ENCODE measurements at regions of chr12 and their contacts with region 1.

Region 1: DNA sequence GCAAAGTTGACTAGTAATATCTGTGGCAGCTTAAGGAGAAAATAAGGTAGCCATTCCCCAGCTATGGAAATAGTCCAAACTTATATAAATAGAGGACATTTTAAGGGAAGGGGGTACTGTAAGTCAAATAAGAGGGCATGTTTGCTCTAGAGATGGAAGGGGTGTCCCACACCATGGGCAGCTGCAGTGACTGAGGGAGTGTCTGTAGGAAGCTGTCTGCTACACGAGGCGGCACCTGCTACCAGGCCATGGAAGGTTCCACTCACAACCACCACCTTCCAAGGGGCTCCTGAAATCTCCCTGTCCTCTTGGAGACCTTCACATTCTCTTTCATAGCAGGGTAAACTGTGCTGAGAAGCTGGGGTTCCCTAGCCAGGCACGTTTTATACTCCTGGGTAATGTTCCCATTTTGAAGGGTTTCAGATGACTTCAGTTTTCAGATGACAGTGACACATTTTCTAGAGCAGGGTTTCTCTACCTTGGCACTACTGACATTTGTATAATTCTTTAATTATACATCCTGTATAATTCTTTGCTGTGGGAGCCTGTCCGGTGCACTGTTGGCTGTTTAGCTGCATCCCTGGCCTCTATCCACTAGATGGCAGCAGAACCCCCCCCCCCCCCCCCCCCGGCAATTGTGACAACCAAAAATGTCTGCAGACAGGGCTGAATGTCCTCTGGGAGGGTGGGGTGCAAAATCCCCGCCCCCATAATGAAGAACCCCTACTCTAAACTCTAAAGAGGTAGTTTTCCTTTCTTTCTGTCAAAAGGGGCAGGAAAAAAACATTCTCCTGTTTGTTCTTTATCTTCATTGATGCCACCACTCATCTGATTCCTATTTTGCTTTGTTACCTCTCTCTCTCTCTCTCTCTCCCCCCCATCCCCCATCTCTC is 11.6 kb upstream of the SMCO2 start:
- DNase-seq: no peak
- H3K4me3 ChIP-seq: no peak overlapping the region
- H3K27ac ChIP-seq: peak overlapping the region in 1 of 59 donors; percentile 24
- H3K27me3 ChIP-seq: no peaks in the 10 kb centered on the region
- CTCF ChIP-seq: peak in 55 of 56 donors; percentile 10 to 74 (median 60)

Region 2: DNA sequence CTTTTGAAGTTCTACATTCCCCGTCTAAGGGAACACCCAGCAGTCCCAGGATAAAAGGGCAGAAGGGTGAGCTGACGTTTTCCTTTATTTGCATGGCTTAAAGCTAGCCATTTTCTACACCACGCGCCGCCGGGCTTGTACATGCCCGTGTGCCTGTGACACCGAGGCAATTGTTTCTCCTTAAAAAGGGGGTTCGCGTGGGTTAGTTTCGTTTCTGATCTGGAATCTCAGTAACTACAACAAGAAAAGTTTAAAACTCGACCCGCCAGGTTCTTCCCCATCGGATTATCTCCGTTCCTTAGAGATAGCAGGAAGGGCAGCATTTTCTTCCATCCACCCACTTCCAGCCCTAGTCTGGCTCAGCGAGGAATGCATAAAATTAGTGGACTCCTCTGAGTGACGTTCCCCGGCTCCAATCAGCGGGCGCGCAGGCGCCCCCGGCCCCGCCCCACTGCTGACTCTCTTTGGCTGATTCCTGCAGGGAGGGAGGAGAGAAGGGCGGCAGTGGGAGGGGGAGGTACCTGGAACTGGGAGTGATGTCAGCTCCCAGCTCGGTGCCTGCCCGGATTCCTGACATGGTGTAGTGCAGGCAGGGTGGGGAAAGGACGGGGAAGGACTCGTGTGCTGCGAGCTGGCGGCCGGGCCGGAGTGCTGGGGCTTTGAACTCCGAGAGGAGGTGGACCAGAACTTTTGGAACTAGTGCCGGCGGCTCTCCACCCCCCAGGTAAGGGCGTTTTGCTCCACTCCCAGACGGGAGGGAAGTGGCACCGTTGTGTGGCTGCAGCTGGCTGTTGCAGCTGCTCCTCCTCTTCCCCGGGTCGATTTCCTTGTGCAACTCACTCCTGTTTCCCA is 88.9 kb after region 1 on chr12 and contains the start of gene PPFIBP1:
- intact Hi-C with region 1: loop called (anchors 5 to 10 kb)
- DNase-seq: peak; percentile 91 to 100 (median 99)
- H3K4me3 ChIP-seq: peak within 1 kb of the TSS; percentile 65 to 95 (median 84)
- H3K27ac ChIP-seq: peak within 1 kb of the TSS; percentile 39 to 95 (median 89)
- H3K27me3 ChIP-seq: no peaks in the 10 kb centered on the region
- CTCF ChIP-seq: peak in 6 of 56 donors; percentile 7 to 27 (median 18)
- total RNA-seq, gene PPFIBP1: 105 to 192 (median 143) TPM

Region 3: DNA sequence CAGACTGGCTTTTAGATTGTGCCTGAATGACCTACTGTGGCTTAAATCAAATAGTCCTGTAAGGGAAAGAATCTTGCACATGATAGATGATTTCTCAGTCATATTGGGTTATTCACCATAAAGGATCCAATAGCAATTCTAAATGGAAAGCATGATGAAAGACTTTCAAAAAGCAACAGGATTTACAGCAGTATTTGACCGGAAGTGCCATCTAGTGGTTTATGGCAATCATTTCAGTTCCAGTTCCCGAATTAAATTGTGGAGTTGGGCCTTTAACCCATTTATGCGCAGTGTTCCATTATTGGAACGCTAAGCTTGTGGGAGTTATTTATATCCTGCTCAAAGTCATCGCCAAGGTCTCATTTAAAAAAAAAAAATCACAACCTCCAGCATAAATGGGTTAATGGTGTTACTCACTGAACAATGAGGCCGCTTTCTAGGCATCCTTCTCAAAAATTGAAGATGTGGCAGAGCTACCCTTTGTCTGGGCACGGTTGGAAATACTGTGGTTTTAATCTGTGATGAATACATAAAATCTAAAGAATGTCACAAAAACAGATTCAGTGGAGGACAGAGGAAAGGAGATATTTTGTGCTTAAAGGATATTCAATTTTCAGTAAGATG is 200.5 kb after region 1 on chr12:
- intact Hi-C with region 1: loop called in 1 of 2 experiments (anchors 5 kb)
- DNase-seq: no peak
- H3K4me3 ChIP-seq: no peak overlapping the region
- H3K27ac ChIP-seq: peak overlapping the region in 12 of 59 donors; percentile 7 to 51 (median 16)
- H3K27me3 ChIP-seq: no peaks in the 10 kb centered on the region
- CTCF ChIP-seq: peak; percentile 54 to 88 (median 76)

Region 4: DNA sequence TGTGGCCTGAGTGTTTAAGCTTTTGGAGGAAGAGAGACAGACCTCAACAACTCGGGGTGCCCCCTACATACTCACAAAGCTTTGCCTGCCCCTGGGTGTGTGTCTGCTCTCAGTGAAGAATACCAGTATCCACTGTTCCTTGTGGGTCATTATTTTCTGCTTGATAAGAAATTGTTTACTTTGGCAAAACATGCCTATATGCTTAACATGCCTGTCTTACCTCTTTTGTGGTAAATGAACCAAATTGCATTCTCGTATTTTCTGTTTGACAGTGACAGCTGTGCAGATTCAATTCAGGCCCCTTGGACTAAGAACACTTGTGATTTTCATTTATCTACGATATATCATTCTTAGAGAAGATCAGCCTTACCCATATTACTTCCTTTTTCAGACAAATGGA is 210.8 kb after region 1 on chr12:
- intact Hi-C with region 1: loop called (anchors 5 kb)
- DNase-seq: no peak
- H3K4me3 ChIP-seq: no peak overlapping the region
- H3K27ac ChIP-seq: peak overlapping the region in 1 of 59 donors; percentile 43
- H3K27me3 ChIP-seq: no peaks in the 10 kb centered on the region
- CTCF ChIP-seq: no peak

Region 5: DNA sequence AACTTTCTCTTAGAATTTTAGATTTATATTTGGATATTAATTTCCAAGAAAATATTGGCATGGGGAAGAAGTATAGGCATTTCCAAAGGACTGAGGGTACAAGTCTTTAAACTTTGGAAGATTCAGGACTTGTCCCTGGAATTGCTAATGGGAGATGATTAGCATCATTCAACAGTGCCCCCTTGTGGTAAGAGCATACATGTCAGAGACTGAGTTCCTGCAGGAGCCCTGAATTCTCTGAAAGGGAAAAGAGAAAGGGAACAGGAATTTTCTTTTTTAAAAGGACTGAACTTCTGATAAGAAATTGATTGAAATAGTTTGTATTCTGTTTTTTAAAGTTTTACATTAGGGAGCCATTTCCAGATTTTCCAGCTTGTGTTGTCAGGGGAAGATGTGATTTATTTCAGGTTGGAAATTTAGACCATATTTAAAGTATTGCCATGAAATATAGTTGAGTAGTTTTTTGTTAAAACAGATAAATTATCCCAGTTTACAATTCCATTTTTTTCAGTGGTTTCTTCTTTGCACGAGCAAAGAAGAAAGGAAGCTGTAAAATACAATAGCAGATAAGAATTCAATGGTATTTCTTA is 217.3 kb after region 1 on chr12:
- intact Hi-C with region 1: loop called (anchors 5 kb)
- DNase-seq: peak in 3 of 10 donors; percentile 37 to 67 (median 51)
- H3K4me3 ChIP-seq: no peak overlapping the region
- H3K27ac ChIP-seq: no peak overlapping the region
- H3K27me3 ChIP-seq: no peaks in the 10 kb centered on the region
- CTCF ChIP-seq: peak; percentile 83 to 97 (median 92)

Region 6: GRCh38 chr12:27703710-27704452 is 269.0 kb after region 1 on chr12:
- intact Hi-C with region 1: loop called in 1 of 2 experiments (anchors 10 kb)
- DNase-seq: peak in 7 of 10 donors; percentile 20 to 78 (median 54)
- H3K4me3 ChIP-seq: no peak overlapping the region
- H3K27ac ChIP-seq: no peak overlapping the region
- H3K27me3 ChIP-seq: no peaks in the 10 kb centered on the region
- CTCF ChIP-seq: peak; percentile 67 to 88 (median 80)